ENCODE measurements at regions of chr2 and their contacts with region 1.

Region 1: GRCh38 chr2:28392297-28393113 is at the start of gene FOSL2:
- DNase-seq: peak; percentile 97
- H3K4me3 Mint-ChIP-seq: peak within 1 kb of the TSS; percentile 94
- H3K27ac Mint-ChIP-seq: peak within 1 kb of the TSS; percentile 99
- H3K4me1 Mint-ChIP-seq: peaks cover 30% of the 10 kb centered on the region
- H3K27me3 Mint-ChIP-seq: no peaks in the 10 kb centered on the region
- total RNA-seq, gene FOSL2: 102 to 110 TPM

Region 2: GRCh38 chr2:27211829-27212627 is 1180.5 kb before region 1 on chr2 and contains the starts of genes ATRAID and SLC5A6:
- CTCF ChIA-PET with region 1: no interaction called
- intact Hi-C with region 1: loop called (anchors 2 kb)
- DNase-seq: peak; percentile 88
- H3K4me3 Mint-ChIP-seq: peak within 1 kb of the TSS; percentile 98
- H3K27ac Mint-ChIP-seq: peak within 1 kb of the TSS; percentile 99
- H3K4me1 Mint-ChIP-seq: peaks cover 29% of the 10 kb centered on the region
- H3K27me3 Mint-ChIP-seq: no peaks in the 10 kb centered on the region
- total RNA-seq, gene ATRAID: 80.5 to 80.8 TPM
- total RNA-seq, gene SLC5A6: 22.6 to 24.8 TPM

Region 3: GRCh38 chr2:27754138-27754588 is 638.3 kb before region 1 on chr2:
- CTCF ChIA-PET with region 1: no interaction called
- intact Hi-C with region 1: loop called (anchors 2 kb)
- DNase-seq: peak; percentile 92
- H3K4me3 Mint-ChIP-seq: no peak overlapping the region
- H3K27ac Mint-ChIP-seq: no peak overlapping the region
- H3K4me1 Mint-ChIP-seq: no peaks in the 10 kb centered on the region
- H3K27me3 Mint-ChIP-seq: peaks cover 2% of the 10 kb centered on the region

Region 4: GRCh38 chr2:28155627-28156026 is 236.9 kb before region 1 on chr2:
- CTCF ChIA-PET with region 1: no interaction called
- intact Hi-C with region 1: loop called (anchors 10 kb)
- DNase-seq: peak; percentile 13
- H3K4me3 Mint-ChIP-seq: no peak overlapping the region
- H3K27ac Mint-ChIP-seq: no peak overlapping the region
- H3K4me1 Mint-ChIP-seq: no peaks in the 10 kb centered on the region
- H3K27me3 Mint-ChIP-seq: no peaks in the 10 kb centered on the region

Region 5: GRCh38 chr2:28359222-28360065 is 33.1 kb before region 1 on chr2:
- CTCF ChIA-PET with region 1: no interaction called
- intact Hi-C with region 1: loop called (anchors 1 kb)
- DNase-seq: peak; percentile 91
- H3K4me3 Mint-ChIP-seq: peak overlapping the region; percentile 16
- H3K27ac Mint-ChIP-seq: peak overlapping the region; percentile 83
- H3K4me1 Mint-ChIP-seq: peaks cover 45% of the 10 kb centered on the region
- H3K27me3 Mint-ChIP-seq: no peaks in the 10 kb centered on the region

Region 6: GRCh38 chr2:28452534-28453081 is 60.1 kb after region 1 on chr2:
- CTCF ChIA-PET with region 1: interaction called, 3 read pairs
- intact Hi-C with region 1: loop called (anchors 1 kb)
- DNase-seq: peak; percentile 91
- H3K4me3 Mint-ChIP-seq: no peak overlapping the region
- H3K27ac Mint-ChIP-seq: no peak overlapping the region
- H3K4me1 Mint-ChIP-seq: peaks cover 36% of the 10 kb centered on the region
- H3K27me3 Mint-ChIP-seq: no peaks in the 10 kb centered on the region

Measured in activated naive CD4-positive, alpha-beta T cell treated with anti-CD3 and anti-CD28 coated beads for 36 hours (primary cell).